B cell (primary cell): ENCODE measurements at regions of chr3 and their contacts with region 1.

Region 1: GRCh38 chr3:183635431-183636220 is at the start of gene KLHL24:
- DNase-seq: peak; percentile 93
- ATAC-seq: peak; percentile 71
- H3K4me3 ChIP-seq: peak within 1 kb of the TSS; percentile 77 to 98 (median 91)
- H3K4me3 Mint-ChIP-seq: peak within 1 kb of the TSS; percentile 88
- H3K27ac ChIP-seq: peak within 1 kb of the TSS; percentile 96 to 99
- H3K27ac Mint-ChIP-seq: peak within 1 kb of the TSS; percentile 90
- H3K4me1 ChIP-seq: peaks cover 18 to 25% of the 10 kb centered on the region in 2 donors
- H3K4me1 Mint-ChIP-seq: peaks cover 28% of the 10 kb centered on the region
- H3K27me3 ChIP-seq: no peaks in the 10 kb centered on the region
- H3K27me3 Mint-ChIP-seq: no peaks in the 10 kb centered on the region
- CTCF ChIP-seq: no peak
- total RNA-seq, gene KLHL24: 134 and 139 TPM in 2 replicates

Region 2: GRCh38 chr3:183099026-183099837 is 536.4 kb before region 1 on chr3 and contains the start of gene MCCC1:
- CTCF ChIA-PET with region 1: no interaction called
- POLR2A ChIA-PET with region 1: no interaction called
- intact Hi-C with region 1: loop called (anchors 1 kb)
- DNase-seq: peak; percentile 97
- ATAC-seq: peak; percentile 96
- H3K4me3 ChIP-seq: peak within 1 kb of the TSS; percentile 74 to 98 (median 98)
- H3K4me3 Mint-ChIP-seq: peak within 1 kb of the TSS; percentile 99
- H3K27ac ChIP-seq: peak within 1 kb of the TSS; percentile 80 to 87
- H3K27ac Mint-ChIP-seq: peak within 1 kb of the TSS; percentile 97
- H3K4me1 ChIP-seq: peaks cover 15% of the 10 kb centered on the region in 2 donors
- H3K4me1 Mint-ChIP-seq: peaks cover 35% of the 10 kb centered on the region
- H3K27me3 ChIP-seq: no peaks in the 10 kb centered on the region
- H3K27me3 Mint-ChIP-seq: no peaks in the 10 kb centered on the region
- CTCF ChIP-seq: no peak
- total RNA-seq, gene MCCC1: 32.8 and 36.3 TPM in 2 replicates

Region 3: GRCh38 chr3:183515968-183516851 is 119.4 kb before region 1 on chr3:
- CTCF ChIA-PET with region 1: interaction called, 3 read pairs
- POLR2A ChIA-PET with region 1: interaction called, 3 read pairs
- intact Hi-C with region 1: loop called (anchors 1 kb)
- DNase-seq: peak; percentile 85
- ATAC-seq: peak; percentile 70
- H3K4me3 ChIP-seq: no peak overlapping the region
- H3K4me3 Mint-ChIP-seq: peak overlapping the region; percentile 78
- H3K27ac ChIP-seq: peak overlapping the region; percentile 53 to 86
- H3K27ac Mint-ChIP-seq: peak overlapping the region; percentile 95
- H3K4me1 ChIP-seq: peaks cover 58 to 69% of the 10 kb centered on the region in 2 donors
- H3K4me1 Mint-ChIP-seq: peaks cover 85% of the 10 kb centered on the region
- H3K27me3 ChIP-seq: no peaks in the 10 kb centered on the region
- H3K27me3 Mint-ChIP-seq: no peaks in the 10 kb centered on the region
- CTCF ChIP-seq: peak; percentile 36

Region 4: GRCh38 chr3:183591881-183592521 is 43.6 kb before region 1 on chr3:
- CTCF ChIA-PET with region 1: interaction called, 5 read pairs
- POLR2A ChIA-PET with region 1: interaction called, 5 read pairs
- intact Hi-C with region 1: loop called (anchors 1 kb)
- DNase-seq: peak; percentile 77
- ATAC-seq: peak; percentile 76
- H3K4me3 ChIP-seq: peak overlapping the region in 1 of 5 experiments; percentile 16
- H3K4me3 Mint-ChIP-seq: peak overlapping the region; percentile 56
- H3K27ac ChIP-seq: no peak overlapping the region
- H3K27ac Mint-ChIP-seq: peak overlapping the region; percentile 15
- H3K4me1 ChIP-seq: peaks cover 32 to 49% of the 10 kb centered on the region in 2 donors
- H3K4me1 Mint-ChIP-seq: peaks cover 47% of the 10 kb centered on the region
- H3K27me3 ChIP-seq: peaks cover 0 to 28% (median 5%) of the 10 kb centered on the region in 4 experiments
- H3K27me3 Mint-ChIP-seq: peaks cover 15% of the 10 kb centered on the region
- CTCF ChIP-seq: peak; percentile 71